ENCODE measurements at regions of chr2 and their contacts with region 1.

Region 1: GRCh38 chr2:145524836-145525235 is 1004.9 kb upstream of the ZEB2 start:
- H3K4me3 Mint-ChIP-seq: no peak overlapping the region
- H3K27ac Mint-ChIP-seq: no peak overlapping the region
- H3K4me1 Mint-ChIP-seq: no peaks in the 10 kb centered on the region
- H3K27me3 Mint-ChIP-seq: no peaks in the 10 kb centered on the region

Region 2: GRCh38 chr2:143771939-143772338 is 1752.9 kb before region 1 on chr2:
- intact Hi-C with region 1: loop called (anchors 5 kb)
- H3K4me3 Mint-ChIP-seq: no peak overlapping the region
- H3K27ac Mint-ChIP-seq: no peak overlapping the region
- H3K4me1 Mint-ChIP-seq: no peaks in the 10 kb centered on the region
- H3K27me3 Mint-ChIP-seq: no peaks in the 10 kb centered on the region

Measured in dendritic cell treated with granulocyte-macrophage colony-stimulating factor and Interleukin-4, amounts not matched to agents 40 ng/mL and 50 ng/mL, for 4 days (primary cell).